Activated B cell treated with CpG ODN at 0.5 μM for 24 hours (primary cell): ENCODE measurements at regions of chrX and their contacts with region 1.

Region 1: GRCh38 chrX:130110379-130111219 is at the start of gene ELF4:
- DNase-seq: peak; percentile 44
- ATAC-seq: peak; percentile 59
- H3K4me3 Mint-ChIP-seq: peak within 1 kb of the TSS; percentile 92
- H3K27ac Mint-ChIP-seq: peak within 1 kb of the TSS; percentile 88
- H3K4me1 Mint-ChIP-seq: peaks cover 40% of the 10 kb centered on the region
- H3K27me3 Mint-ChIP-seq: no peaks in the 10 kb centered on the region
- CTCF ChIP-seq: no peak
- total RNA-seq, gene ELF4: 32.4 and 33.0 TPM in 2 replicates

Region 2: DNA sequence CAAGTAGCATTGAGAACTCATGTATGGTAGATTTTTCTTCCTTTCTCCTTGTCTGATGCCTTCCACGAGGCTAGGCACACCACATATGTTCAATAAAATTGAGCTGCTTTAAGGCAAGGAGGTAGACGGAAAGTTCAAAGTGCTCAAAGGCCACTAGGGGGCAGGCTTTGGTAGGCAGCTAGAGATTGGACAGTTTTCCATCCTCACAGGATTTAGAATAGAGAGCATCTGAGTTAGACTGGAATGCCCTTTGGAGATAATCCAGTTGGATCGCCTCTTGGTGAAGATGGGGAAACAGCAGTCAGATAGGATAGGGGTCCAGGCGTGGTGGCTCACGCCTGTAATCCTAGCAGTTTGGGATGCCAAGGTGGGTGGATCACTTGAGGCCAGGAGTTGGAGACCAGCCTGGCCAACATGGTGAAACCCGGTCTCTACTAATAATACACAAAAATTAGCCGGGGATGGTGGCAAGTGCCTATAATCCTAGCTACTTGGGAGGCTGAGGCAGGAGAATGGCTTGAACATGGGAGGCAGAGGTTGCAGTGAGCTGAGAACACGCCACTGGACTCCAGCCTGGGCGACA is 30.7 kb before region 1 on chrX:
- CTCF ChIA-PET with region 1: interaction called, 28 read pairs
- POLR2A ChIA-PET with region 1: interaction called, 37 read pairs
- intact Hi-C with region 1: loop called (anchors 1 kb)
- DNase-seq: no peak
- ATAC-seq: no peak
- H3K4me3 Mint-ChIP-seq: no peak overlapping the region
- H3K27ac Mint-ChIP-seq: peak overlapping the region; percentile 61
- H3K4me1 Mint-ChIP-seq: peaks cover 41% of the 10 kb centered on the region
- H3K27me3 Mint-ChIP-seq: no peaks in the 10 kb centered on the region
- CTCF ChIP-seq: no peak

Region 3: DNA sequence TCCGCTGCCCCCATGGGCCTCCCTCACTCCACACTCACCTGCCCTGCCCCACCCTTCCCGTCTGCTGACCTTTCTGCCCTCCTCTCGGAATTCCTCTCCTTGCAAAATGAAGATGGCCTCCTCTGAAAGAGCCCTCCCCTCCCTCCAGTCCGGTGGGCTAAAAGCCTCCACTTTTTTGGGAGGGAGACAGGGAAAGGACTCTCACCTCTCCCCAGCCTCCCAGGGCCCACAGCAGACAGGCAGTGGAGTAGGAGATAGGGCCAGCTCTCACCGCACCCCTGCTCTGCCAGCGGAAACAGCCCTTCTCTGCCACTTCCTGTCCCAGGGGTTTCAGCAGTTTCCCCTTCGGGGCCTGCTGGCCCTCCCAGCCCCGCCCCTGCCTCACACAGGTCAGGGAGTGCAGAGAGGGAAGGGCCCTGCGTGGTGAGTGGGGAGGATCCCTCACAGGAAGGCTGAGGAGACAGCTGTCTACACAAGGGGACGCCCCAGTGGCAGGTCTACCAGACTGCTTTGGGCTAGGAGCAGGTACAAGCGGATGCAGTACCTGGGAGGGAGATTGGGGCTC is 18.6 kb before region 1 on chrX:
- CTCF ChIA-PET with region 1: no interaction called
- POLR2A ChIA-PET with region 1: interaction called, 37 read pairs
- intact Hi-C with region 1: loop called (anchors 1 kb)
- DNase-seq: peak; percentile 56
- ATAC-seq: peak; percentile 96
- H3K4me3 Mint-ChIP-seq: peak overlapping the region; percentile 82
- H3K27ac Mint-ChIP-seq: peak overlapping the region; percentile 94
- H3K4me1 Mint-ChIP-seq: peaks cover 62% of the 10 kb centered on the region
- H3K27me3 Mint-ChIP-seq: no peaks in the 10 kb centered on the region
- CTCF ChIP-seq: no peak

Region 4: DNA sequence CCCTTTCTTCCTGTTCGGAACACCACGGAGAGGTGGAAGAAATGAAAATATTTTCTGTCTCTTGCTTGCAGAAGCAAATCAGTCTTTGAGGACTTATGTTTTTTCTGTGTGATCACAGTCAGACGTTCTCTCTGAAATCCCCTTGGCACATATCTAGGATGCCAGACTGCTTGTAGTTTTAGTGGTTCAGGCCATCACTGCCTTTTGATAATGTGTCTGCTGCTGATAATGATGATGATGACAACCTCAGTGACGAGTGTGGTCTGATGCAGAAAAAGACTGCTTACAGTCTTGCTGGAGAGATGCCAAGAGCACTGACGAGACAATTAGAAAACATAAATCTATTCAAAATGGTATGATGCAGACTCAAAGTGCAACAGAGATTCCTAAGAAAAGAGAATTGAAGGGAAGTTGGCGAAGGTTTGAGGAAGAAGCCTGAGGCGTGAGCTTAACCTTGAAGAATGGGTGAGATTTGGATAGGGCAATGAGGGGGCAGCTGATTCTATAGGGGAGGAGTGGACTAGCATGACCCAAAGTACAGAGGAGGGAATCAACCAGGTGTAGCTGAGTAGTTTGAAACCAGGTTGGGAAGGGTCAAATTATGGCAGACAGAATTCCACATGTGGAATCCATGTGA is 69.1 kb after region 1 on chrX:
- CTCF ChIA-PET with region 1: no interaction called
- POLR2A ChIA-PET with region 1: no interaction called
- intact Hi-C with region 1: loop called (anchors 2 kb)
- DNase-seq: no peak
- ATAC-seq: no peak
- H3K4me3 Mint-ChIP-seq: no peak overlapping the region
- H3K27ac Mint-ChIP-seq: no peak overlapping the region
- H3K4me1 Mint-ChIP-seq: peaks cover 42% of the 10 kb centered on the region
- H3K27me3 Mint-ChIP-seq: no peaks in the 10 kb centered on the region
- CTCF ChIP-seq: no peak

Region 5: GRCh38 chrX:130260316-130260715 is 149.7 kb after region 1 on chrX:
- CTCF ChIA-PET with region 1: no interaction called
- POLR2A ChIA-PET with region 1: no interaction called
- intact Hi-C with region 1: no loop called
- DNase-seq: no peak
- ATAC-seq: no peak
- H3K4me3 Mint-ChIP-seq: no peak overlapping the region
- H3K27ac Mint-ChIP-seq: no peak overlapping the region
- H3K4me1 Mint-ChIP-seq: no peaks in the 10 kb centered on the region
- H3K27me3 Mint-ChIP-seq: no peaks in the 10 kb centered on the region
- CTCF ChIP-seq: no peak

Region 6: GRCh38 chrX:130788786-130789581 is 678.4 kb after region 1 on chrX:
- CTCF ChIA-PET with region 1: no interaction called
- POLR2A ChIA-PET with region 1: no interaction called
- intact Hi-C with region 1: no loop called
- DNase-seq: no peak
- ATAC-seq: no peak
- H3K4me3 Mint-ChIP-seq: no peak overlapping the region
- H3K27ac Mint-ChIP-seq: no peak overlapping the region
- H3K4me1 Mint-ChIP-seq: no peaks in the 10 kb centered on the region
- H3K27me3 Mint-ChIP-seq: no peaks in the 10 kb centered on the region
- CTCF ChIP-seq: no peak